Panc1 (cell line): ENCODE measurements at regions of chr1 and their contacts with region 1.

Region 1: DNA sequence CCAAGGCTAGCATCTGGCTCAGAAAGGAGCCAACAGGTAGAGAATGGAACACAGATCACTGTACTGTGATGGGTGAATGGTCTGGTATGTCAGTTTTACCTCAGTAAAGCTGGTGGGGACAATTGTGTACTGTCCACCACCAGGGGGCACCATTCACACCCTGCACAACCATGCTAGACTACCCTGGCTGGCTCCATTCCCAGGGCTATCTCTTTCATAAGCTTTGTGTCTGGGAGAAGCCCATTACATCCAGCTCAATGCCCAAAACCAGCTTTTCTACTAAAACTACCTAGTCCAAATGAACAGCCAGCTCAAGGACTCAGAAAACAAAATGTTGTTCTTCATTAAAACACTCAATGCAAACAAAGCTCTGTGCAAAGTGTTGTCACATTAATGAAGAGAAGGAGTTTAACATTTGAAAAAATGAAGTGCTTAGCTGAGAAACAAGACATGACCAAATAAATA is 62.0 kb upstream of the RASAL2 start:
- DNase-seq: no peak
- ATAC-seq: peak; percentile 96
- H3K4me3 ChIP-seq: no peak overlapping the region
- H3K27ac ChIP-seq: no peak overlapping the region
- H3K4me1 ChIP-seq: no peaks in the 10 kb centered on the region
- H3K27me3 ChIP-seq: no peaks in the 10 kb centered on the region
- CTCF ChIP-seq: peak; percentile 91

Region 2: GRCh38 chr1:178122283-178122682 is 90.4 kb after region 1 on chr1:
- CTCF ChIA-PET with region 1: no interaction called
- POLR2A ChIA-PET with region 1: no interaction called
- in situ Hi-C with region 1: no loop called
- intact Hi-C with region 1: no loop called
- DNase-seq: no peak
- ATAC-seq: no peak
- H3K4me3 ChIP-seq: no peak overlapping the region
- H3K27ac ChIP-seq: peak overlapping the region; percentile 57
- H3K4me1 ChIP-seq: peaks cover 28% of the 10 kb centered on the region
- H3K27me3 ChIP-seq: no peaks in the 10 kb centered on the region
- CTCF ChIP-seq: no peak

Region 3: GRCh38 chr1:178137238-178137637 is 105.3 kb after region 1 on chr1:
- CTCF ChIA-PET with region 1: interaction called, 15 read pairs
- POLR2A ChIA-PET with region 1: no interaction called
- in situ Hi-C with region 1: no loop called
- intact Hi-C with region 1: no loop called
- DNase-seq: no peak
- ATAC-seq: no peak
- H3K4me3 ChIP-seq: no peak overlapping the region
- H3K27ac ChIP-seq: 0 out of 2 replicates have a peak overlapping the region, but pooled peaks have one; percentile 29
- H3K4me1 ChIP-seq: no peaks in the 10 kb centered on the region; the same call in 1 of the 2 replicates
- H3K27me3 ChIP-seq: no peaks in the 10 kb centered on the region
- CTCF ChIP-seq: no peak